ENCODE measurements at regions of chr17 and their contacts with region 1.

Region 1: GRCh38 chr17:47188876-47189731 is at the start of gene CDC27:
- DNase-seq: peak; percentile 100
- ATAC-seq: peak; percentile 91 to 97 (median 91)
- H3K4me3 ChIP-seq: peak within 1 kb of the TSS; percentile 75
- H3K4me3 Mint-ChIP-seq: peak within 1 kb of the TSS; percentile 91
- H3K27ac ChIP-seq: peak within 1 kb of the TSS; percentile 85
- H3K27ac Mint-ChIP-seq: peak within 1 kb of the TSS; percentile 97 to 98
- H3K4me1 ChIP-seq: peaks cover 30% of the 10 kb centered on the region
- H3K4me1 Mint-ChIP-seq: peaks cover 53 to 61% of the 10 kb centered on the region in 2 donors
- H3K27me3 ChIP-seq: no peaks in the 10 kb centered on the region
- H3K27me3 Mint-ChIP-seq: no peaks in the 10 kb centered on the region
- CTCF ChIP-seq: no peak
- total RNA-seq, gene CDC27: 77.3 to 87.3 (median 78.8) TPM

Region 2: DNA sequence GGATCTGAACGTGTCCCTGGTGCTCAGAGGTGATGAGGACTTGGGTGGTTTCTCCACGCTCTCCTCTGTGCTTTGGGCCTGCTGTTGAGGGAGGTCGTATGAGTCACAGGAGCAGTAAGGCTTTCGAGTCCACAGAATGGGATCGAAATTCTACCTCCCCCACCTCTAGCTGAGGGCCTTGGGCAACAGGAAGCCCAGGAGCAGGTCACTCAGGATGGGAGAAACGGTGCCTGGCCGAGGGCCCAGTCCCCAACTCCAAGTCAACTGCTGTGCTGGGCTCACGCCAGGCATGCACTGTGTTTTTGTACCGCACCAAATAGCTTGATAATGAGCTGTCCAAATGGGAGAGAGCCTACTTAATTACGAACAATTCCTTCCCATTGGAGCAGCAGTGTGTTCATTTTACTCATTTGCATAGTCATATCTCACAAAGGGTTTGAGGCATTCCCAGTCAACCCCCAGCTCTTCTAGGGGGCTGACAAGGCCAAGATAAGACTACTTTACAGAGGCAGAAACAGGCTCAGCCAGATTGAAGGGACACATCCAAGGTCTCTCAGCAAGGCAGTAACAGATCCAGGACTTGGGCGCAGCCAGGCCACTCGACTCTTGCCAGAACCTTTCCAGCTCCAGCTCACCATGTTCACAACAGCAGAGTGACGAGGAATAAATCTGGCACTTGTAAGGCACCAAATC is 424.2 kb before region 1 on chr17:
- intact Hi-C with region 1: no loop called
- DNase-seq: no peak
- ATAC-seq: no peak
- H3K4me3 ChIP-seq: no peak overlapping the region
- H3K4me3 Mint-ChIP-seq: no peak overlapping the region
- H3K27ac ChIP-seq: no peak overlapping the region
- H3K27ac Mint-ChIP-seq: no peak overlapping the region
- H3K4me1 ChIP-seq: peaks cover 6% of the 10 kb centered on the region
- H3K4me1 Mint-ChIP-seq: no peaks in the 10 kb centered on the region
- H3K27me3 ChIP-seq: peaks cover 3% of the 10 kb centered on the region
- H3K27me3 Mint-ChIP-seq: no peaks in the 10 kb centered on the region
- CTCF ChIP-seq: no peak

Region 3: GRCh38 chr17:46940621-46941404 is 248.3 kb before region 1 on chr17:
- intact Hi-C with region 1: no loop called
- DNase-seq: peak; percentile 43 to 78
- ATAC-seq: peak; percentile 75 to 77 (median 76)
- H3K4me3 ChIP-seq: no peak overlapping the region
- H3K4me3 Mint-ChIP-seq: no peak overlapping the region
- H3K27ac ChIP-seq: no peak overlapping the region
- H3K27ac Mint-ChIP-seq: peak overlapping the region; percentile 33 to 36
- H3K4me1 ChIP-seq: peaks cover 32% of the 10 kb centered on the region
- H3K4me1 Mint-ChIP-seq: peaks cover 22 to 27% of the 10 kb centered on the region in 2 donors
- H3K27me3 ChIP-seq: no peaks in the 10 kb centered on the region
- H3K27me3 Mint-ChIP-seq: no peaks in the 10 kb centered on the region
- CTCF ChIP-seq: peak; percentile 58

Region 4: GRCh38 chr17:47205419-47205963 is 16.4 kb after region 1 on chr17:
- intact Hi-C with region 1: loop called (anchors 2 kb)
- DNase-seq: peak in 1 of 2 donors; percentile 87
- ATAC-seq: peak; percentile 42 to 79 (median 75)
- H3K4me3 ChIP-seq: peak overlapping the region; percentile 30
- H3K4me3 Mint-ChIP-seq: peak overlapping the region; percentile 72
- H3K27ac ChIP-seq: peak overlapping the region; percentile 95
- H3K27ac Mint-ChIP-seq: peak overlapping the region; percentile 86 to 90
- H3K4me1 ChIP-seq: peaks cover 36% of the 10 kb centered on the region
- H3K4me1 Mint-ChIP-seq: peaks cover 29 to 30% of the 10 kb centered on the region in 2 donors
- H3K27me3 ChIP-seq: no peaks in the 10 kb centered on the region
- H3K27me3 Mint-ChIP-seq: no peaks in the 10 kb centered on the region
- CTCF ChIP-seq: no peak

Region 5: GRCh38 chr17:47229535-47230443 is 40.7 kb after region 1 on chr17:
- intact Hi-C with region 1: loop called (anchors 1 kb)
- DNase-seq: peak; percentile 47 to 88
- ATAC-seq: peak; percentile 86 to 99 (median 91)
- H3K4me3 ChIP-seq: no peak overlapping the region
- H3K4me3 Mint-ChIP-seq: peak overlapping the region; percentile 60
- H3K27ac ChIP-seq: no peak overlapping the region
- H3K27ac Mint-ChIP-seq: peak overlapping the region in 1 of 2 donors; percentile 19
- H3K4me1 ChIP-seq: peaks cover 9% of the 10 kb centered on the region
- H3K4me1 Mint-ChIP-seq: peaks cover 11 to 17% of the 10 kb centered on the region in 2 donors
- H3K27me3 ChIP-seq: no peaks in the 10 kb centered on the region
- H3K27me3 Mint-ChIP-seq: peaks cover 10 to 11% of the 10 kb centered on the region in 2 donors
- CTCF ChIP-seq: peak; percentile 93